Breast epithelium (tissue), 4 donors: ENCODE measurements at regions of chr17 and their contacts with region 1.

Region 1: DNA sequence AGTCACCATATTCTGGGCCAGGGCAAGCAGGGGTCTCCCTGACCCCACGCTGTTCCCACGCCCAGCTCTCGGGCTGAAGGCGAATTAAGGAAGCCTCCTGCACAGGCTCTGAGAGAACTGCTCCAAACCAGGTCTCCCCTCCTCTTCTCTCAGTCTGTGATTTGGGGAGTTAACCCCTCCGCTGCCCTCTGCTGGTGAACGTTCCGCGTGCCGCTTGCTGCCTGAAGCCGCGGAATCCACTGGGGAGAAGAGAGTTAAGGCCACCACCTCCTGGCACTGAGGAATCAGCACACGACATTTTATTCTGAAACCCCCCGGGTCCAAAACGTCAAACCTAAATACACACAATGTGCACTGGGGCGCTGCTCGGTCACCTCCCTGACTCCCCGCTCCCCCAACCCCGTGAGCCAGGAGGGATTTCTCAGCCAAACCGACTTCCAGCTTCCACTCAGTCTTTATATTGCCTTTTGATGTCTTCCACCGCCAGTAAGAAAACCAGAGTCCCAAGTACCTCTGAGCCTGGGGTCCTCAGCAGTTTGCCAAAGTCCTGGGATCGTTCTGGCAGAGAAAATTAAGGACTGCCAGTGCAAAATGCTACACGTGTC is 54.4 kb upstream of the RCVRN start:
- DNase-seq: peak in 1 of 2 donors; percentile 15
- H3K4me3 ChIP-seq: peak overlapping the region in 2 of 3 donors; percentile 26 to 54
- H3K27ac ChIP-seq: no peak overlapping the region
- H3K4me1 ChIP-seq: no peaks in the 10 kb centered on the region
- H3K27me3 ChIP-seq: no peaks in the 10 kb centered on the region
- CTCF ChIP-seq: peak in 2 of 3 donors; percentile 7 to 37
- POLR2A ChIP-seq: no peak

Region 2: GRCh38 chr17:9071016-9071415 is 888.5 kb before region 1 on chr17:
- intact Hi-C with region 1: no loop called
- DNase-seq: no peak
- H3K4me3 ChIP-seq: no peak overlapping the region
- H3K27ac ChIP-seq: no peak overlapping the region
- H3K4me1 ChIP-seq: peaks cover 0 to 3% of the 10 kb centered on the region in 2 donors
- H3K27me3 ChIP-seq: no peaks in the 10 kb centered on the region
- CTCF ChIP-seq: no peak
- POLR2A ChIP-seq: no peak

Region 3: DNA sequence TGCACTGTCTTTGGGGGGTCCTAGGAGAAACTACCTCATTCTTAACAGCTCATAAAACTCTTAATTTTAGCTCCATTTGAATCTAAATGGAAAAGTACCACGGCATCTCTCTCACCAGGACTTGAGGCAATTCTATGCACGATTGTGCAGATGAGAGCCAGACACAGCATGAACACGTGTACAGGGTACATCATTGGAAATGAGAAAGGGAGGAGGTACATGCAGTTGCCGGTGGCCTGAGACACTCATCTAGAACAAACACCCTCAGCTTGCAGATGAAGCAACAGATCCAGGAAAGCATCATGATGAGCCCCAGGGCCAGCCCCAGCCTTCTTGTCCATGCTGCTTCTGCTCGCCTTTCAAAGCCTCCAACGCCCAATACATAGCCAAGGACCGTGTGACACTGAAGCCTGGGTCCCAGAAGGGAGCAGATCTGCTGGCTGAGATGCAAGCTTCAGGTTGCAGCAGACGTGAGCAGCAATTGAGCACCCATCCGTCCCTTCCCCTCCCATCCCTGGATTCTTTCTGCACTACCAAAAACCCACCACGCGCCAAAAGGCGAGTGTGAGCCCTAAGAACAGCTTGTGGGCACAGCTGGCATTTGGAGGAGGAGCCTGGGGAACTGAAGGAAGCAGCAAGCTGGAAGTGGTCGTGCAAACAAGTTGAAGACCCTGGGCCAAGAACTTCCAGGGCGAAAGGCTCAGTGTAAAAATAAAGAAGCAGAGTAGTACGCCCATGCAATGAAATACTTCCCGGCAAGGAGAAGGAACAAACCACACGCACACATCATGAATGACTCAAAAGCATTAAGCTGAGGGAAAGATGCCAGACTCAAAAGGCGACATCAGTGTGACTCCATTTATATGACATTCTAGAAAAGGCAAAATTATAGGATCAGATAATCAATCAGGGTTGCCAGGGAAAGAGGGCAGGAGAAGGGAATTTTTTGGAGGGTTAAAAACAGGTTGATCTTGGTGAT is 47.1 kb before region 1 on chr17:
- intact Hi-C with region 1: no loop called
- DNase-seq: no peak
- H3K4me3 ChIP-seq: no peak overlapping the region
- H3K27ac ChIP-seq: peak overlapping the region in 1 of 2 donors; percentile 32
- H3K4me1 ChIP-seq: no peaks in the 10 kb centered on the region
- H3K27me3 ChIP-seq: no peaks in the 10 kb centered on the region
- CTCF ChIP-seq: no peak
- POLR2A ChIP-seq: no peak

Region 4: DNA sequence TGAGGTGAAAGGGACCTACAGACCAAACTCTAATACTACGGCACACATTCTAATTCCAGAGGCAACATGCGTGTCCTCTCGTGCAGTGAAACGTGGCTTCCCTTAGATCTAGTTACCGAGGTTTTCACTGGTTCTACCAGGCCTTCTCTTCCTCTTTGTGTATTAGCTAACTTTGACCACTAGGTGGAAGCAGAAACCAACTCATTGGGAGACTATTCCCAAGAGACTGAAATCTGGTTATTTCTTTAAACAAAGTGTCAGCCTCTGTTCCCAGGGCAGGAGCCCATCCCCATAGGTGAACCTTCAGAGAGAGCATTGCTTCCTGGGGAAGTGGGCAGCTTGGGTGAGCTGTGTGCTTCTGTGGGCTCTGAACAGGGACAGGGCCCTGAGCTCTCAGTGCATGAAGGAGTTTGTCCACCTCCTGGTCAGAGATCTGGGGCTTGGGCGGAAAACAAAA is 34.7 kb before region 1 on chr17:
- intact Hi-C with region 1: no loop called
- DNase-seq: no peak
- H3K4me3 ChIP-seq: no peak overlapping the region
- H3K27ac ChIP-seq: peak overlapping the region in 1 of 2 donors; percentile 32
- H3K4me1 ChIP-seq: no peaks in the 10 kb centered on the region
- H3K27me3 ChIP-seq: no peaks in the 10 kb centered on the region
- CTCF ChIP-seq: peak; percentile 81 to 91 (median 87)
- POLR2A ChIP-seq: no peak

Region 5: DNA sequence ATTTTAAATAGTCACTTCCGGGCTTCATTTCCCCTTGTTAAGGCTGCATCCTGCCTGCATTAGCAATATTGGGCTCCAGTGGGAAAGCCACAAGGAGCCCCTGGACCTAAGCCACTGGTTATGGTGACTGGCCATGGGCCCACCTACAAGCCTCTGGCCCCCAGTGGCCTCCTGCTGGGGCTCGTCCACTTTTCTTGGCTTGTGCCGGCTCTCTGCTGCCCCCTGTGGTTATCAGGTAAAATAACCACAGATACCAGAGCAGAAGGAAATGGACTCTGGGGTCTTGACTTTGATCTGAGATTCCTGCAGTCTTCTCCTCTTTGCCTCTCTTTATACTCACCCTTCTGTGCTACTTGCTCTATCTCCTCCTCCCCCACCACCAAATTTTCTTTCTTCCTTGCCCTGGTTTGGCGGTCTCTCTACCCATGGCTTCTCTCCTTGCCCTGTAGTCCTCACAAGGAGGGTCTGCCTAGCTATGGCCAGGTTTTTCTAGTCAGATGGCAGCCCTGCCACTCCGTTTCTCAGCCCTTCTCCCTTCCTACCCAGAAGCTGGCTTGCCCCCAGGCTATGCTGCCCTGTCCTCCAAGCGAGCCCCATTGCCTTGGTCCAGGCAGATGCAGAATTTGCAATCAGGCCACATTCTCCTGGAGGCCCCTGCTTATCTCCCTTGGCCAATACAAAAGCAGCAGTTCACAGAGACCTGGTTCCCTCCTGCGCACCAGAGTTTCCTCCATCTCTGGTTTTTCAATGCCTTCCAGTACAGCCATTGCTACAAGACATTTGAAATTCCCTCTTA is 28.5 kb after region 1 on chr17:
- intact Hi-C with region 1: loop called (anchors 2 kb)
- DNase-seq: no peak
- H3K4me3 ChIP-seq: no peak overlapping the region
- H3K27ac ChIP-seq: peak overlapping the region in 1 of 2 donors; percentile 52
- H3K4me1 ChIP-seq: no peaks in the 10 kb centered on the region
- H3K27me3 ChIP-seq: no peaks in the 10 kb centered on the region
- CTCF ChIP-seq: peak; percentile 48 to 49 (median 49)
- POLR2A ChIP-seq: no peak

Region 6: GRCh38 chr17:10059369-10060211 is 100.1 kb after region 1 on chr17:
- intact Hi-C with region 1: no loop called
- DNase-seq: no peak
- H3K4me3 ChIP-seq: no peak overlapping the region
- H3K27ac ChIP-seq: peak overlapping the region; percentile 72 to 94
- H3K4me1 ChIP-seq: peaks cover 0 to 3% of the 10 kb centered on the region in 2 donors
- H3K27me3 ChIP-seq: no peaks in the 10 kb centered on the region
- CTCF ChIP-seq: no peak
- POLR2A ChIP-seq: no peak